ENCODE measurements at regions of chr1 and their contacts with region 1.

Region 1: GRCh38 chr1:117534995-117535467 is 70.8 kb upstream of the TENT5C start:
- DNase-seq: peak; percentile 51
- H3K4me3 Mint-ChIP-seq: no peak overlapping the region
- H3K27ac Mint-ChIP-seq: no peak overlapping the region
- H3K4me1 Mint-ChIP-seq: peaks cover 12% of the 10 kb centered on the region
- H3K27me3 Mint-ChIP-seq: no peaks in the 10 kb centered on the region

Region 2: GRCh38 chr1:117493906-117494305 is 41.1 kb before region 1 on chr1:
- CTCF ChIA-PET with region 1: no interaction called
- DNase-seq: no peak
- H3K4me3 Mint-ChIP-seq: no peak overlapping the region
- H3K27ac Mint-ChIP-seq: no peak overlapping the region
- H3K4me1 Mint-ChIP-seq: no peaks in the 10 kb centered on the region
- H3K27me3 Mint-ChIP-seq: no peaks in the 10 kb centered on the region

Region 3: DNA sequence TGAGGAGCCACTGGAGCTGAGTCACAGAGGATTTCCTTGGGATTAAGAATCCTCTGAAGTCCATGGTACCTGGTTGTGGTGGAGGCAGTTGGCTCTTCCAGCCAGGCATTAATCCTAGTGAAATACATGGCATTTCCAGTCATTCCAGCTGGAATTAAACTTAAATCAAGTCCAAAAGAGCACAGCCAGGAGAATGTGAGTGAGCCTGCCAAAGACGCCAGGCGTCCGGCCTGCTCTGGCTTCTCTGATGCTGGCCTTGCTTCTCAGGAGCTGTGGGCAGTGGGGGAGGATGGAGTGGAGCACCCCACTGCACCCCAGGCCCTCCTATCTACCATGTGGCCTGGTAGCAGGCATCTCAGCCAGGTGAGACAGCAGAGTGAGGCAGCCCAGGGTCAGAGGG is 47.4 kb after region 1 on chr1:
- CTCF ChIA-PET with region 1: interaction called, 11 read pairs
- DNase-seq: no peak
- H3K4me3 Mint-ChIP-seq: no peak overlapping the region
- H3K27ac Mint-ChIP-seq: no peak overlapping the region
- H3K4me1 Mint-ChIP-seq: peaks cover 2% of the 10 kb centered on the region
- H3K27me3 Mint-ChIP-seq: peaks cover 21% of the 10 kb centered on the region

Region 4: GRCh38 chr1:117654493-117655219 is 119.6 kb after region 1 on chr1:
- CTCF ChIA-PET with region 1: interaction called, 23 read pairs
- DNase-seq: peak; percentile 41
- H3K4me3 Mint-ChIP-seq: peak overlapping the region; percentile 31
- H3K27ac Mint-ChIP-seq: peak overlapping the region; percentile 87
- H3K4me1 Mint-ChIP-seq: peaks cover 87% of the 10 kb centered on the region
- H3K27me3 Mint-ChIP-seq: peaks cover 28% of the 10 kb centered on the region

Region 5: GRCh38 chr1:117681143-117681542 is 146.1 kb after region 1 on chr1:
- CTCF ChIA-PET with region 1: interaction called, 160 read pairs
- DNase-seq: no peak
- H3K4me3 Mint-ChIP-seq: no peak overlapping the region
- H3K27ac Mint-ChIP-seq: no peak overlapping the region
- H3K4me1 Mint-ChIP-seq: peaks cover 5% of the 10 kb centered on the region
- H3K27me3 Mint-ChIP-seq: peaks cover 39% of the 10 kb centered on the region

Region 6: GRCh38 chr1:117895482-117896114 is 360.6 kb after region 1 on chr1:
- CTCF ChIA-PET with region 1: interaction called, 10 read pairs
- DNase-seq: peak; percentile 74
- H3K4me3 Mint-ChIP-seq: no peak overlapping the region
- H3K27ac Mint-ChIP-seq: no peak overlapping the region
- H3K4me1 Mint-ChIP-seq: no peaks in the 10 kb centered on the region
- H3K27me3 Mint-ChIP-seq: no peaks in the 10 kb centered on the region